MCF 10A (cell line): ENCODE measurements at regions of chr22 and their contacts with region 1.

Region 1: GRCh38 chr22:19854778-19855503 is at the starts of genes GNB1L and RTL10:
- DNase-seq: peak; percentile 96
- H3K4me3 Mint-ChIP-seq: peak within 1 kb of the TSS; percentile 86
- H3K27ac Mint-ChIP-seq: peak within 1 kb of the TSS; percentile 86
- H3K4me1 Mint-ChIP-seq: peaks cover 21% of the 10 kb centered on the region
- H3K27me3 Mint-ChIP-seq: no peaks in the 10 kb centered on the region
- CTCF ChIP-seq: no peak
- total RNA-seq, gene GNB1L: 4.3 and 7.1 TPM in 2 replicates
- total RNA-seq, gene RTL10: 16.8 and 20.6 TPM in 2 replicates

Region 2: DNA sequence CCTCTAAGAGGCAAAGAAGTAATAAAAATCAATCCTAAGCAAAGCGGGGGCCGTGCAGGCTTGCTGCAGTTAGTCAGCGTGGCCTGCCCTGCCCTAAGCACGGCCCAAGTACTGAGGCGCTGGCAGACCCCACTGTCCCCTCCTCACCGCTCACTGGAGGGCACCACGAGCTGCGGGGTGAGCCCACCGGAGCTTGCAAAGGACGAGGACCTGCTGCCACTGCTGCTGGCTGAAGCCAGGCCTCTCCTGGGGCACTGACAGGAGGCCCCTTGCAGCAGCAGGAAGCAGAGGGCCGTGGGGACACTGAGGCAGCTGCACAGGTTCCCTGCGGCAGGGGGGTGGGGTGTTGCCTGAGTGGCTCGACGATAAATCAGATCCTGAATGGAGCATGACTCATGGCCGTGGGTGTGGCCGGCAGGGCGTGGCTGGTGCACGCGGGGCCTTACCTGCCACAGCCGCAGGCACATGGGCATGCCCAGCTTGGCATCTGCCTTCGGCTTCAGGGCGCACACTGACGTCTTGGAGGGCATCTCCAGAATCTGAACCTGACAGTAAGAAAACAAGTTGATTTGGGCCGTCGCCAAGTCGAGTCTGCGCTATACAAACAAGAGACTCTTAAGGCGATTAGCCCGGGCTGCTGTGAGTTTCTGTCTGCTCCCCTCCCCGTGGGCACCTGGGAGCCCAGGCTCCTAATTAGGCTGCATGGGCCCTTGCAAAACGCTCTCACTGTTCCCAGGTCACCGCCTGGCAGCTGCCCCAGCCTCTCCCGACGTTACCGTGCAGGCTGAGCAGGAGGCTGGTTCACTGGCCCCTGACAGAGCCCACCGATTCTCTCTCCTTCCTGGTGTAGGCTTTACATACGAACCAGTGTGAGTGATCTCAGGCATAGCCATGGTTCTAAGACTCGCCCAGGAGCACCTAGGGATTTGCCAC is 48.5 kb before region 1 on chr22:
- CTCF ChIA-PET with region 1: interaction called, 3 read pairs
- POLR2A ChIA-PET with region 1: interaction called, 53 read pairs
- intact Hi-C with region 1: loop called (anchors 1 kb)
- DNase-seq: peak; percentile 95
- H3K4me3 Mint-ChIP-seq: peak overlapping the region; percentile 56
- H3K27ac Mint-ChIP-seq: peak overlapping the region; percentile 95
- H3K4me1 Mint-ChIP-seq: peaks cover 28% of the 10 kb centered on the region
- H3K27me3 Mint-ChIP-seq: no peaks in the 10 kb centered on the region
- CTCF ChIP-seq: no peak

Region 3: GRCh38 chr22:19844377-19845053 is 10.4 kb before region 1 on chr22:
- CTCF ChIA-PET with region 1: interaction called, 3 read pairs
- POLR2A ChIA-PET with region 1: interaction called, 12 read pairs
- intact Hi-C with region 1: no loop called
- DNase-seq: peak; percentile 58
- H3K4me3 Mint-ChIP-seq: no peak overlapping the region
- H3K27ac Mint-ChIP-seq: no peak overlapping the region
- H3K4me1 Mint-ChIP-seq: peaks cover 21% of the 10 kb centered on the region
- H3K27me3 Mint-ChIP-seq: no peaks in the 10 kb centered on the region
- CTCF ChIP-seq: no peak

Region 4: DNA sequence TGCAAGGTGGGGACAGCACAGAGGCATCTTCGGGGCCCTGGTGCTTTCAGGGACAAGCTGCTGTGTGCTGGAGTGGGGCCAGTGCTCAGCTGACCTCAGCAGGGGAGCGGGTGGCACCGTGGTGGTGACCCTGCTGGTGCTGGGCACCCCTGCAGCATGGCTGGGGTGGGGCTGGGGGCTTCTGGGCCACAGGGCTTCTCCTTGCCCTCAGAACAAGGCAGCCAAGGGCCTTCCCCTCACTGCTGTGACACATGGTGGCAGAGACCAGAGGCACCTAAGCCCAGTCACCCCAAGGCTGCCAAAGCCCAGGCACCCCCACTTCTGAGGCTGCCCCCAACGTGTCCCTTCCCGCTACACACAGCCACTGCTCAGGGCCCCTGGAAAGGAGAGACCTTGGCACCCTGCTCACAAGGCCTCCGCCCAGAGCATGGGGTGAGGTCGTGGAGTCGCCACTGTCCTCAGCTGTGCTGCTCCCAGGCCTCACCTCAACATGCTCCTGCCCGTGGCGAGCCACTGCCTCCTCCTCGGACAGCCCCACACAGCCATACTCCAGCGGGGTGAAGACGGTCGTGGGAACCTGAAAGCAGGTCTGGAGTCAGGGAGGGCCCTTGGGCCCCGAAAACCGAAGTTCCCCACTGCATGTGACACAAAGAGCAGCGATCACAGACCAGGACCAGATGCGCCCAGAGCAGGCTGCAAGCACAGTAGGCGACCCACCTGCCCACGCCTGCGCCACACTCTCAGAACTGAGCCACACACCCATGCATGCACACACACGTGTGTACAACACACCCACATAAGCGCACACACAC is 25.0 kb after region 1 on chr22:
- CTCF ChIA-PET with region 1: interaction called, 4 read pairs
- POLR2A ChIA-PET with region 1: interaction called, 16 read pairs
- intact Hi-C with region 1: loop called (anchors 2 kb)
- DNase-seq: no peak
- H3K4me3 Mint-ChIP-seq: no peak overlapping the region
- H3K27ac Mint-ChIP-seq: peak overlapping the region; percentile 88
- H3K4me1 Mint-ChIP-seq: peaks cover 43% of the 10 kb centered on the region
- H3K27me3 Mint-ChIP-seq: no peaks in the 10 kb centered on the region
- CTCF ChIP-seq: no peak

Region 5: GRCh38 chr22:19909350-19910179 is 54.6 kb after region 1 on chr22:
- CTCF ChIA-PET with region 1: no interaction called
- POLR2A ChIA-PET with region 1: no interaction called
- intact Hi-C with region 1: loop called (anchors 1 kb)
- DNase-seq: peak; percentile 75
- H3K4me3 Mint-ChIP-seq: no peak overlapping the region
- H3K27ac Mint-ChIP-seq: peak overlapping the region; percentile 5
- H3K4me1 Mint-ChIP-seq: peaks cover 6% of the 10 kb centered on the region
- H3K27me3 Mint-ChIP-seq: no peaks in the 10 kb centered on the region
- CTCF ChIP-seq: peak; percentile 73

Region 6: GRCh38 chr22:20052309-20053259 is 197.6 kb after region 1 on chr22:
- CTCF ChIA-PET with region 1: no interaction called
- POLR2A ChIA-PET with region 1: no interaction called
- intact Hi-C with region 1: no loop called
- DNase-seq: no peak
- H3K4me3 Mint-ChIP-seq: no peak overlapping the region
- H3K27ac Mint-ChIP-seq: no peak overlapping the region
- H3K4me1 Mint-ChIP-seq: no peaks in the 10 kb centered on the region
- H3K27me3 Mint-ChIP-seq: no peaks in the 10 kb centered on the region
- CTCF ChIP-seq: no peak